B cell (primary cell): ENCODE measurements at regions of chr20 and their contacts with region 1.

Region 1: GRCh38 chr20:5126512-5127203 is at the start of gene CDS2:
- DNase-seq: peak; percentile 100
- ATAC-seq: peak; percentile 86
- H3K4me3 ChIP-seq: peak within 1 kb of the TSS; percentile 79 to 91 (median 89)
- H3K4me3 Mint-ChIP-seq: peak within 1 kb of the TSS; percentile 88
- H3K27ac ChIP-seq: peak within 1 kb of the TSS; percentile 98
- H3K27ac Mint-ChIP-seq: peak within 1 kb of the TSS; percentile 94
- H3K4me1 ChIP-seq: peaks cover 21 to 26% of the 10 kb centered on the region in 2 donors
- H3K4me1 Mint-ChIP-seq: peaks cover 35% of the 10 kb centered on the region
- H3K27me3 ChIP-seq: no peaks in the 10 kb centered on the region
- H3K27me3 Mint-ChIP-seq: no peaks in the 10 kb centered on the region
- CTCF ChIP-seq: peak; percentile 69
- total RNA-seq, gene CDS2: 48.6 and 49.4 TPM in 2 replicates

Region 2: DNA sequence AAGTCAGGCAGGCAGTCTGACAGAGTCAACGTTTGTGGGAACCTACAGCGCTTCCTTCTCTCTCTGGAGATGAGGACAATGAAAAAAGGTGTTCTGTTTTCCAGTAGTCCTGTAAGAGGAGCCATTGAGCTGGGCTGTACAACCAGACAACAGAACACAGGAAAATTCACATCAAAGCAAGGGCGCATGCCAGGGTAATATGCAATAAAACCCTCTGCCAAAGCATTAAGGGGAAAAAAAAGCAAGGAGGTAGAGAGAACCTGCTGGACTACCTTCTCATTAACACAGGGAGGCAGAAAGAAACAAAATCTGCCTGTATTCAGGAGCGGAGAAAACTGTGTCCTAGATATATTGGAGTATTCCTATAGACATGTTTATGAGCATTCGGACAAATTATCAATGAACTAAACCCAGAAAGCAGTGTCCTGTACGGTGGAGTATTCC is 1112.6 kb before region 1 on chr20:
- CTCF ChIA-PET with region 1: no interaction called
- POLR2A ChIA-PET with region 1: no interaction called
- intact Hi-C with region 1: loop called (anchors 5 kb)
- DNase-seq: peak; percentile 55
- ATAC-seq: no peak
- H3K4me3 ChIP-seq: peak overlapping the region in 1 of 5 experiments; percentile 69
- H3K4me3 Mint-ChIP-seq: peak overlapping the region; percentile 78
- H3K27ac ChIP-seq: no peak overlapping the region
- H3K27ac Mint-ChIP-seq: peak overlapping the region; percentile 2
- H3K4me1 ChIP-seq: peaks cover 14 to 30% of the 10 kb centered on the region in 2 donors
- H3K4me1 Mint-ChIP-seq: peaks cover 28% of the 10 kb centered on the region
- H3K27me3 ChIP-seq: no peaks in the 10 kb centered on the region
- H3K27me3 Mint-ChIP-seq: no peaks in the 10 kb centered on the region
- CTCF ChIP-seq: peak; percentile 25

Region 3: GRCh38 chr20:4813863-4814695 is 312.6 kb before region 1 on chr20:
- CTCF ChIA-PET with region 1: interaction called, 3 read pairs
- POLR2A ChIA-PET with region 1: interaction called, 5 read pairs
- intact Hi-C with region 1: loop called (anchors 2 kb)
- DNase-seq: peak; percentile 94
- ATAC-seq: peak; percentile 48
- H3K4me3 ChIP-seq: peak overlapping the region; percentile 49 to 67 (median 50)
- H3K4me3 Mint-ChIP-seq: peak overlapping the region; percentile 92
- H3K27ac ChIP-seq: peak overlapping the region; percentile 99
- H3K27ac Mint-ChIP-seq: peak overlapping the region; percentile 99
- H3K4me1 ChIP-seq: peaks cover 69 to 82% of the 10 kb centered on the region in 2 donors
- H3K4me1 Mint-ChIP-seq: peaks cover 87% of the 10 kb centered on the region
- H3K27me3 ChIP-seq: no peaks in the 10 kb centered on the region
- H3K27me3 Mint-ChIP-seq: no peaks in the 10 kb centered on the region
- CTCF ChIP-seq: peak; percentile 12

Region 4: DNA sequence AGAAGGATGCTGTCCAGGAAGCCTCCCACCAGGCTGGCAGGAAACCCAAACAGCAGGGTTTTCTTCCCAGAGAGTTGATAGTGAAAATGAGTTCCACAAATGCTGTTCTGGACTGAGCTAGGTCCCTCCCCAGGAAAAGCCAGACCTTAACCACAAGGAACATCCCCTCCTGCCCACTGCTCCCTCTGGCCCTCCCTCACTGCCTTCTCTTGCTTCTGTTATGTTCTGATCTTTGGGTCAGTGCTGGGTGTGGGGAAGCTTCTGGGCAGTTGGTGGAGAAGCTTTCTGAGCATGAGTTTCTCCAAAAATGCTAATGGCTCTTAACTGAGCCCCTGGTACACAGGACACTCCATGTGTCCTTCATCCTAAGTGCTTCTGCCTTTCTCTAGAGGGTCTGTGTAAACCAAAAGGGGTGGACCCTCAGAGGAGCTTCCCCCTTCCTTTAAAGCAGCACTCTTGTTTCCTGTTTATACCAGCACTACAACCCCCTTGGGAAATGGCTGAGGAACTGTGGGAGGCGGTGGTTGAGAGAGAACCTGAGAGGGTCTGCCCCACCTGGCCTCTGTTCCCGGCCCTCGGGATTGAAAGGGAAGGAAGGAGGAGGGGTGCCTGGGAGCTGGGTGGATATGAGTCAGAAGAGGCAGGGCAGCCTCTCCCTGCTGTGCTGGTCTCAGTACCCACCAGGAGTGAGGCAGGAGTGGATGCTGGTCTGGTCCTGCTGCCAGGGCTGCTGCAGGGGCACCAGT is 42.2 kb after region 1 on chr20:
- CTCF ChIA-PET with region 1: interaction called, 10 read pairs
- POLR2A ChIA-PET with region 1: interaction called, 7 read pairs
- intact Hi-C with region 1: no loop called
- DNase-seq: peak; percentile 49
- ATAC-seq: peak; percentile 62
- H3K4me3 ChIP-seq: peak overlapping the region in 1 of 5 experiments; percentile 17
- H3K4me3 Mint-ChIP-seq: peak overlapping the region; percentile 71
- H3K27ac ChIP-seq: peak overlapping the region in 1 of 2 donors; percentile 62
- H3K27ac Mint-ChIP-seq: peak overlapping the region; percentile 88
- H3K4me1 ChIP-seq: peaks cover 35 to 62% of the 10 kb centered on the region in 2 donors
- H3K4me1 Mint-ChIP-seq: peaks cover 78% of the 10 kb centered on the region
- H3K27me3 ChIP-seq: no peaks in the 10 kb centered on the region
- H3K27me3 Mint-ChIP-seq: no peaks in the 10 kb centered on the region
- CTCF ChIP-seq: no peak

Region 5: DNA sequence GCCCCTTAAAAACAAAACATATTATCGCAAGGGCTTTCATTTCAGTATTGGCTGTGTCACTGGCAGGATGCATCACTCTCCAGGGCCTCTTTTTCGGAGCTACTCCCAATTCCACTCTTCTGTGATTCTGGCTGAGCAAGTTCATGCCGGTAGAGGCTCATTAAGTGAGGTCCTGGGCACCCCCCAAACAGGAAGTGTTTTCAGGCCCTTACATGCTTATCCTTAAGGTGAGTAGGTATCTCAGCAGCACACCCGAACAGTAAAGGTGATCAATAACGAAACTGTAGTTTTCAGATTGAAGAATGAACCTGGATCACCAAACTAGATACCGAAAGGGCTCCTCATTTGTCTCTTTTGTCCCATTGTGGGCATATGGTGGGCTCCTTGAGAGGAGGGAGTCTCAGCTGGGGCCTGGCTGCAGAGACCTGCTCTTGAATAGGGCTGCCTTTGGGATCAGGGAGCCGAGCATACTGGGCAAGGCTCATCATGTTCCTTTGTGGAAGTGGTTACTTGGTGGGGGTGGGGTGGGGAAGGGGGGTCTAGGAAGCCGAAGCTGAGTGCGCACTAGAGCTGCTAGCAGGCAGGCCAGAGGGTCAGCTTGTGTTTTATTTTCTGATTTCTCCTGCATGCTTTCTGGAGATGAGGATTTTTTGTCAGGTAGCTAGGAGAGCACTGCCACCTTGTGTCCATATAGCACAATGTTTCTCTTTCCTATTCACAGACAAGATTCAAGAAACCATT is 65.3 kb after region 1 on chr20:
- CTCF ChIA-PET with region 1: interaction called, 149 read pairs
- POLR2A ChIA-PET with region 1: interaction called, 13 read pairs
- intact Hi-C with region 1: loop called (anchors 1 kb)
- DNase-seq: peak; percentile 76
- ATAC-seq: peak; percentile 84
- H3K4me3 ChIP-seq: no peak overlapping the region
- H3K4me3 Mint-ChIP-seq: no peak overlapping the region
- H3K27ac ChIP-seq: peak overlapping the region in 1 of 2 donors; percentile 38
- H3K27ac Mint-ChIP-seq: peak overlapping the region; percentile 56
- H3K4me1 ChIP-seq: peaks cover 0 to 7% of the 10 kb centered on the region in 2 donors
- H3K4me1 Mint-ChIP-seq: peaks cover 9% of the 10 kb centered on the region
- H3K27me3 ChIP-seq: no peaks in the 10 kb centered on the region
- H3K27me3 Mint-ChIP-seq: no peaks in the 10 kb centered on the region
- CTCF ChIP-seq: peak; percentile 77

Region 6: GRCh38 chr20:5222919-5223634 is 96.4 kb after region 1 on chr20:
- CTCF ChIA-PET with region 1: interaction called, 17 read pairs
- POLR2A ChIA-PET with region 1: no interaction called
- intact Hi-C with region 1: loop called (anchors 1 kb)
- DNase-seq: peak; percentile 55
- ATAC-seq: no peak
- H3K4me3 ChIP-seq: no peak overlapping the region
- H3K4me3 Mint-ChIP-seq: no peak overlapping the region
- H3K27ac ChIP-seq: no peak overlapping the region
- H3K27ac Mint-ChIP-seq: no peak overlapping the region
- H3K4me1 ChIP-seq: no peaks in the 10 kb centered on the region
- H3K4me1 Mint-ChIP-seq: no peaks in the 10 kb centered on the region
- H3K27me3 ChIP-seq: no peaks in the 10 kb centered on the region
- H3K27me3 Mint-ChIP-seq: peaks cover 5% of the 10 kb centered on the region
- CTCF ChIP-seq: peak; percentile 86